GM10248 (cell line): ENCODE measurements at regions of chr1 and their contacts with region 1.

Region 1: DNA sequence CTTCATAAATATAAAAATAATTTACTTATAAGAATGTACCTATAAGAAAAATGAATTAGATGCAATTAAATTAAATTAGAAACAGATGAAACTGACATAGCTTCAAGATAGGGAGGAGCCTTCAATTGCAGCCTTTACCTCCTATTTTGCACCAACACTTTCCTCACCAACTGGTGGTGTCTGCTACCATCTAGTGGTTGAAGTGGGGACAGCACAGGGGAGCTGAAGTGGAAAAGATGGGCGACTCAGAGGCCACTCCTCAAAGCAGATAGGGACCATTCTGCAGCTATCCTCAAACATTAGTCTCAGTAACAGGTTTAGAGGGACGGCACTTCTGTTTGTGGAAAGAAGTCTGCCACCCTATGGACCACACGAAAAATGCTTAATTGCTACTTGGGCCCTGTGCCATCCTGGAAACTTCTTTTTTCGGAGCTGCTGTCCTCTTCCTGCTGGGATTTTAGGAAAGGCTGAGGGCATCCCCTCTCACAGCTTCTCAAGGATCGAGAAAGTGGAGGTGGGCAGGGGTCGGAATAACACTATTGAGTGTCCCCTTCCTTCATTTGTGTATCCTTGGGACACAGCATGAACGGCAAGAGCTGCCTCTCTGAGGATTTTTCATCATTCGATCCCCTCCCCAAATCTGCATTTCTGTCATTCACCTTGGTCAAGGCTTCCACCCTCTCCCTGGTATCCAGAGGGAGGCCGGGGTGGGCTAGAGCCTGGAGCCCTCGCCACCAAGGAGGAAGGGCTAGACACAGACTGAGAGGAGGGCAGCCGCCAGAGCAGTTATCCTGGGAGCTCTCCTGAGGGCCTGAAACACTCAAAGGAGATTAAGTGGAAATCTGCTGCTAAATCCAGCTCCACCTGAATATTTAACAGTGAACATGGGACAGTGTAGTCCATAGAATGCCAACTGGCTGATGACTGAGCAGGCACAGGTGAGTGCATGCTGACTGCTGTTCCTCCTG is 9.6 kb downstream of the PROK1 start:
- DNase-seq: peak; percentile 82
- CTCF ChIP-seq: peak; percentile 97

Region 2: GRCh38 chr1:110196917-110197765 is 263.4 kb before region 1 on chr1:
- CTCF ChIA-PET with region 1: interaction called, 295 read pairs
- POLR2A ChIA-PET with region 1: no interaction called
- DNase-seq: peak; percentile 88
- CTCF ChIP-seq: peak; percentile 95

Region 3: DNA sequence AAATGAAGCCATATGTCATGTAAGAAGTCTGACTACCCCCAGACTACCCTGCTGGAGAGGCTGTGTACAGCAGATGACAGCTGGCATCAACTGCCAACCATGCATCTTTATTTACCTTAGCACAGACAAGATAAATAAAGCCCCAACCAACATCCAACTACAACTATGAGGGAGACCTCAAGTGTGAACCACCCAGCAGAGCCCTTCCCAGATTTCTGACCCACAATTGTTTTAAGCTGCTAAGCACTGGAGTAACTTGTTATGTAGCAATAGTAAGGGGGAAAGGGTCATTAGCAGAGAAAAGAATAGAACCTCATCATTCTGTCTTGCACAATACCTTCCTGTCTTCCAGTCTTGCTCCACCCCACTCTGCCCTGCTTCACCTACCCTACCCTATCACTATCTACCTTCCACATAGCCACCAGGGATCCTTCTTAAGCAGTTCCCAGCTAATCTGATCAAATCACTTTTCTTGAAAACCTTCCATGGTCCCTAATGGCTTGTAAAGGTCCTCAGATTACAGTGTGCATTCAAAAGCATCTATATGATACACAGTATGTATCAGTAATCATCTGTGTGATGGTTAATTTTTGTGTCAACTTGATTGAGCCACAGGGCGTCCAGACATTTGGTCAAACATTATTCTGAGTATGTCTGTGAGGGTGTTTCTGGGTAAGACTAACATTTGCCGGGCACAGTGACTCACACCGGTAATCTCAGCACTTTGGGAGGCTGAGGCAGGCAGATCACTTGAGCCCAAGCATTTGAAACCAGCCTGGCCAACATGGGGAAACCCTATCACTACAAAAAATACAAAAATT is 141.0 kb before region 1 on chr1:
- CTCF ChIA-PET with region 1: interaction called, 21 read pairs
- POLR2A ChIA-PET with region 1: no interaction called
- DNase-seq: no peak
- CTCF ChIP-seq: no peak

Region 4: DNA sequence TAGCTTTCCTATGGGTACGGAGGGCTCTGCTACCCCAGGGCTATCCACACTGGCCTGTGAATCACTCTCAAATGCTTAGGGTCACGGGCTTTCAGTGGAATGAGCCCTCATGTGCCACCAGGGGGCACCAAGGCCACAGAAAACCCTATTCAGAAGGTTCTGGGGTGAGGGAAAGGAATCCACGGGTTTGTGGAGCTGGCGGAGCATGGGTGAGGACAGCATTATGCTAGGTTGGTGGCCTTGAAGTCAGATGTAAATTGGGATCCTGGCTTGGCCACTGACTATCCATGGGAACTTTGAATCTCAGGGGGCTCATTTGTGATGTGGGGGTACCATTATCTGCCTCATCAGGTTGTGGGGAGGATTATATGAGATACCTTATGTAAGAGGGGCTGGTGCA is 48.0 kb before region 1 on chr1:
- CTCF ChIA-PET with region 1: interaction called, 135 read pairs
- POLR2A ChIA-PET with region 1: no interaction called
- DNase-seq: peak; percentile 64
- CTCF ChIP-seq: peak; percentile 64

Region 5: GRCh38 chr1:110440877-110441276 is 19.7 kb before region 1 on chr1:
- CTCF ChIA-PET with region 1: interaction called, 17 read pairs
- POLR2A ChIA-PET with region 1: no interaction called
- DNase-seq: no peak
- CTCF ChIP-seq: no peak

Region 6: DNA sequence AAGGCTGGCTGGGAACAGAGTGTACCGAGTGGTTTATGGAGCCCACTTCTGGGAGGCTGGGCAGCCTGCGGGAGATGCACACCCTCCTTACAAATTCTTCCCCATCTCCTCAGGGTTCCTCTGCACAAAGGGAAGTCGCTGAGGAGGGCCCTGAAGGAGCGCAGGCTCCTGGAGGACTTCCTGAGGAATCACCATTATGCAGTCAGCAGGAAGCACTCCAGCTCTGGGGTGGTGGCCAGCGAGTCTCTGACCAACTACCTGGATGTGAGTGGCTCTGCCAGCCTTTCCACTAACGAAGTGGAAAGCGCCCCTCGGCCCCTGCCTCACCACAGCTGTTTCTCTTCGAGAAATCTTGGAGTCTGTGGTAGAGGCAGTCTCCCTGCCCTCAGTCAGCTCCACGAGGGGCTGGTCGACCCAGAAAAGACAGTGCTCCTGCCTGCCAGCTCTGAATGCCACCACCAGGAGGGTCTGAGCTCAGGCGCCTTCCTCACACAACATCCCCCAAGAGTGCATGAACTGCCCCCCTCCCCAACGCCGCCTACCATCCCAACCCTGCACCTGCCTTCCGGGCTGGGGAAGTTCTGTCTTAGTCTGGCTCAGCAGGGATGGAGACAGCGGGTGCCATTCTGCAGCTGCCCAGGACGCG is 22.2 kb after region 1 on chr1:
- CTCF ChIA-PET with region 1: interaction called, 12 read pairs
- POLR2A ChIA-PET with region 1: no interaction called
- DNase-seq: no peak
- CTCF ChIP-seq: no peak

Region 7: DNA sequence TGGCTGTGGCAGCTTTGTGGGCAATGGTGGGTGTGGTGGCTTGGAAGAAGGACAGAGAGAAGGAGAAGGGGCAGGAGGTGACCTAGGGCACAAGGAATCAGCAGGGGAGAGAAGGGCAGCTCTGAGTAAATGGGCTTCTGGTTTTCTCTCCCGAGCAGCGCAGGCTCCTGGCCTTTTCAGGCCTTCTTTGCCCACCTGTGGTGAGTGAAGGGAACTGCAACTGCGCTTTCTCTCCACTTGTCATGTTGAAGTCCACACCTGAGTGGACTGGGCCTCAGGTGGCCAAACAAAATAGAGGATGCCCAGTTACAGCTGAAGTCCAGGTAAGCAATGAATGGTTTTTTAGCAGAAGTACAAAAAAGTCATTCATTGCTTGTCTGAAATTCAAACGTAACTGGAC is 87.8 kb after region 1 on chr1:
- CTCF ChIA-PET with region 1: no interaction called
- POLR2A ChIA-PET with region 1: no interaction called
- DNase-seq: no peak
- CTCF ChIP-seq: peak; percentile 23